Activated CD8-positive, alpha-beta T cell treated with anti-CD3 and anti-CD28 coated beads, Interleukin-2, amount 10 ng/mL, durations not matched to agents 7 days and 5 days (primary cell): ENCODE measurements at regions of chr3 and their contacts with region 1.

Region 1: DNA sequence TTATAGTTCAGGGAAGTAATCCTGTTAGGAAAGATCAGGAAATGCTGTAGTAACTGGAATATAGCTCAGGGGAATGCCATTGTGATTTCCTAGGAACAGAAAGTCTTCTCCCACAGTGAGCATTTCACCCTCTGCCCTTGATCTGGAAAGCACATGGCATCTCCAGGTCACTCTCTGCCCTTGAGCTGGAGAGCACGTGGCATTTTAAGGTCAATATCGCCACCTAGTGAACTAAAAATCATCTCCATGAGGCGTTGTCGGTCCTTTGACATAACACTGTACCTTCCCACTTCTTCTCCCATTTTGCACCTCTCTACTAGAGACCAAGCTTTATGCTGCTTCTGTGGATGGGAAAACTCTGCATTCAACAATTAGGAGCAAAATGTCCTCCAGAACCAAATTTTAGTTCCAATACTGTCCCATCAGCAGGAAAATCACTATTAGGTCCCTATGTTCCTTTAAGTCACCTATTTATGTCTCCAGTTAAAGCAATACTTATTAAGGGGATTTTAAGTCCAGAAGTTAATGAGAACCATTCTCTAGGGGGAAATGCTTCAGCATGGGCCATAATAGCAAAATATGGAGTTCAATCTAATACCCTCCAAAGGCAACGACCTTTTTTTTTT is 54.7 kb upstream of the GK5 start:
- DNase-seq: peak; percentile 63
- ATAC-seq: peak; percentile 94
- H3K4me3 Mint-ChIP-seq: no peak overlapping the region
- H3K27ac Mint-ChIP-seq: no peak overlapping the region
- H3K4me1 Mint-ChIP-seq: peaks cover 21% of the 10 kb centered on the region
- H3K27me3 Mint-ChIP-seq: no peaks in the 10 kb centered on the region

Region 2: GRCh38 chr3:142124243-142124642 is 155.8 kb before region 1 on chr3:
- CTCF ChIA-PET with region 1: interaction called, 20 read pairs
- POLR2A ChIA-PET with region 1: interaction called, 3 read pairs
- DNase-seq: no peak
- ATAC-seq: no peak
- H3K4me3 Mint-ChIP-seq: no peak overlapping the region
- H3K27ac Mint-ChIP-seq: no peak overlapping the region
- H3K4me1 Mint-ChIP-seq: no peaks in the 10 kb centered on the region
- H3K27me3 Mint-ChIP-seq: no peaks in the 10 kb centered on the region

Region 3: GRCh38 chr3:142180761-142181362 is 99.2 kb before region 1 on chr3:
- CTCF ChIA-PET with region 1: interaction called, 12 read pairs
- POLR2A ChIA-PET with region 1: no interaction called
- DNase-seq: peak; percentile 39
- ATAC-seq: no peak
- H3K4me3 Mint-ChIP-seq: no peak overlapping the region
- H3K27ac Mint-ChIP-seq: no peak overlapping the region
- H3K4me1 Mint-ChIP-seq: no peaks in the 10 kb centered on the region
- H3K27me3 Mint-ChIP-seq: no peaks in the 10 kb centered on the region